AG04450 (cell line): ENCODE measurements at regions of chr2 and their contacts with region 1.

Region 1: GRCh38 chr2:158753641-158754611 is 41.2 kb upstream of the DAPL1 start:
- DNase-seq: peak; percentile 30
- H3K4me3 ChIP-seq: peak overlapping the region; percentile 21; the same call in 1 of the 2 replicates
- H3K27ac ChIP-seq: no peak overlapping the region
- H3K27me3 ChIP-seq: peaks cover 10% of the 10 kb centered on the region
- CTCF ChIP-seq: peak; percentile 93

Region 2: GRCh38 chr2:158034199-158034866 is 719.6 kb before region 1 on chr2:
- CTCF ChIA-PET with region 1: interaction called, 43 read pairs
- POLR2A ChIA-PET with region 1: no interaction called
- DNase-seq: no peak
- H3K4me3 ChIP-seq: no peak overlapping the region
- H3K27ac ChIP-seq: no peak overlapping the region
- H3K27me3 ChIP-seq: peaks cover 11% of the 10 kb centered on the region
- CTCF ChIP-seq: peak; percentile 51

Region 3: GRCh38 chr2:158456309-158457066 is 297.4 kb before region 1 on chr2 and contains the starts of genes CCDC148 and PKP4:
- CTCF ChIA-PET with region 1: interaction called, 51 read pairs
- POLR2A ChIA-PET with region 1: no interaction called
- DNase-seq: peak; percentile 76
- H3K4me3 ChIP-seq: peak within 1 kb of the TSS; percentile 86
- H3K27ac ChIP-seq: peak within 1 kb of the TSS; percentile 62
- H3K27me3 ChIP-seq: no peaks in the 10 kb centered on the region
- CTCF ChIP-seq: peak; percentile 22
- polyA plus RNA-seq, gene CCDC148: 0.12 and 0.22 TPM in 2 replicates
- polyA plus RNA-seq, gene PKP4: 20.4 and 24.9 TPM in 2 replicates

Region 4: GRCh38 chr2:158637357-158637756 is 116.6 kb before region 1 on chr2:
- CTCF ChIA-PET with region 1: no interaction called
- POLR2A ChIA-PET with region 1: no interaction called
- DNase-seq: no peak
- H3K4me3 ChIP-seq: no peak overlapping the region
- H3K27ac ChIP-seq: no peak overlapping the region
- H3K27me3 ChIP-seq: no peaks in the 10 kb centered on the region
- CTCF ChIP-seq: no peak

Region 5: GRCh38 chr2:158733430-158733755 is 20.5 kb before region 1 on chr2:
- CTCF ChIA-PET with region 1: interaction called, 37 read pairs
- POLR2A ChIA-PET with region 1: no interaction called
- DNase-seq: no peak
- H3K4me3 ChIP-seq: no peak overlapping the region
- H3K27ac ChIP-seq: no peak overlapping the region
- H3K27me3 ChIP-seq: peaks cover 18% of the 10 kb centered on the region
- CTCF ChIP-seq: no peak